Adrenal gland (tissue), 19 donors: ENCODE measurements at regions of chr6 and their contacts with region 1.

Region 1: DNA sequence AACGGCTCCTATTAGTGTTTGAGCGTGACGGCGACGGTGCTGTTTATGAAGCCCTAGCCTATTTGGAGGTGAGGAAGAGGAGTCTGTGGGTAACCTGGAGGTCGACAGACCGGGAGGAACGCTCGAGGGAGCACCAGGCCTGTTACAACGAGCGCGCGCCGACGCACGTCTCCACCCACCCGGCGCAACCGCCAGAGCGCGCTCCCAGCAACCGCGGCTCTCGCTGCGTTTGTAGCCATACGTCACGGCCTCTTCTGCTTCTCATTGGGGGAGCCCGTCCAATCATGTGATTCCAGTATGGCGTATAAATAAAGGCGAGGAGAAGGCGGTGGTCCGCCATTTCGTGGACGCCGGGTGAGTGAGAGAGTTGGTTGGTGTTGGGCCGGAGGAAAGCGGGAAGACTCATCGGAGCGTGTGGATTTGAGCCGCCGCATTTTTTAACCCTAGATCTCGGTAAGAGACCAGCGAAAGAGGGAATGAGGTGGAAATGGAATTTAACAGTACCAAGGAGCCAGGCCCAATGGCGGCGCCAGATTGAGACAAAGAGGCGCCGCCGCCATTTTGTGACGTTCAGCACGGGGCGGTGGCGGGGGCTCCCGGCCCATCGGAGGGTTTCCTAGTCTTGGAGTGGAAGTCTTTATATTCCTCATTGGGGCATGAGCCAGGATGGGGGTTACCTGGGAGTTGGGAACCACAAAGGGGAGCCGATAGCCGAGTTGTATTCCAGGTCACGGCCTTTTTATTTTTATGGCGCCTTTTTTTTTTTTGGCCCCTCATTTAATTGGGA is at the start of gene SRSF3:
- DNase-seq: peak; percentile 97 to 99 (median 98)
- H3K4me3 ChIP-seq: peak within 1 kb of the TSS; percentile 25 to 97 (median 68)
- H3K27ac ChIP-seq: peak within 1 kb of the TSS; percentile 90 to 98 (median 95)
- H3K4me1 ChIP-seq: peaks cover 28% of the 10 kb centered on the region in 2 donors
- H3K27me3 ChIP-seq: no peaks in the 10 kb centered on the region
- CTCF ChIP-seq: peak; percentile 28 to 67 (median 54)
- POLR2A ChIP-seq: peak; percentile 99
- total RNA-seq, gene SRSF3: 28.9 to 291 (median 139) TPM

Region 2: GRCh38 chr6:36546920-36547645 is 47.1 kb before region 1 on chr6 and contains the start of gene STK38:
- intact Hi-C with region 1: loop called (anchors 10 kb)
- DNase-seq: peak; percentile 89 to 94 (median 92)
- H3K4me3 ChIP-seq: peak within 1 kb of the TSS; percentile 31 to 95 (median 85)
- H3K27ac ChIP-seq: peak within 1 kb of the TSS; percentile 82 to 96 (median 94)
- H3K4me1 ChIP-seq: peaks cover 16 to 27% of the 10 kb centered on the region in 2 donors
- H3K27me3 ChIP-seq: no peaks in the 10 kb centered on the region
- CTCF ChIP-seq: peak in 1 of 6 experiments; percentile 10
- POLR2A ChIP-seq: peak; percentile 89 to 90
- total RNA-seq, gene STK38: 7.4 to 21.3 (median 11.8) TPM

Region 3: GRCh38 chr6:36720251-36721141 is 126.3 kb after region 1 on chr6:
- intact Hi-C with region 1: no loop called
- DNase-seq: no peak
- H3K4me3 ChIP-seq: no peak overlapping the region
- H3K27ac ChIP-seq: no peak overlapping the region
- H3K4me1 ChIP-seq: no peaks in the 10 kb centered on the region
- H3K27me3 ChIP-seq: no peaks in the 10 kb centered on the region
- CTCF ChIP-seq: no peak
- POLR2A ChIP-seq: no peak